ENCODE measurements at regions of chr10 and their contacts with region 1.

Region 1: GRCh38 chr10:76902949-76903348 is 734.7 kb downstream of the KCNMA1 start:
- DNase-seq: peak; percentile 73 to 92 (median 87)
- ATAC-seq: peak; percentile 81 to 85
- H3K4me3 ChIP-seq: no peak overlapping the region
- H3K27ac ChIP-seq: no peak overlapping the region
- H3K4me1 ChIP-seq: no peaks in the 10 kb centered on the region
- H3K27me3 ChIP-seq: no peaks in the 10 kb centered on the region

Region 2: DNA sequence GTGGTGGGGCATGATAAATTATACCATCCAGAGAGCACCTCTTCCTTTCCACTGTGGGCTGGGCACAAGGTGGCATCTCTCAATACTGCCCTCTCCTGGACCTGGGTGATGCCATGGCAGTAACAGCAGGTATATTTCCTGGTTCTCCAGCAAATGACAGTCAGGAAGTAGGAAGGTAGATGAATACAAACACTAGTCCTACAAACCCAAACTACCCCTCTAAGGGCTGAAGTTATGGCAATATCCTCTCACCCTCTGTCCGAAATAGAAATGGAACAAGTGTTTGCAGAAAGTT is 270.2 kb before region 1 on chr10:
- intact Hi-C with region 1: loop called in 2 of 4 experiments (anchors 5 to 10 kb)
- DNase-seq: no peak
- ATAC-seq: peak; percentile 49 to 61
- H3K4me3 ChIP-seq: no peak overlapping the region
- H3K27ac ChIP-seq: no peak overlapping the region
- H3K4me1 ChIP-seq: no peaks in the 10 kb centered on the region
- H3K27me3 ChIP-seq: no peaks in the 10 kb centered on the region

Region 3: GRCh38 chr10:77207828-77208185 is 304.9 kb after region 1 on chr10:
- intact Hi-C with region 1: no loop called
- DNase-seq: no peak
- ATAC-seq: no peak
- H3K4me3 ChIP-seq: no peak overlapping the region
- H3K27ac ChIP-seq: no peak overlapping the region
- H3K4me1 ChIP-seq: no peaks in the 10 kb centered on the region
- H3K27me3 ChIP-seq: no peaks in the 10 kb centered on the region

Measured in right cardiac atrium (tissue), 5 donors.